Ascending aorta (tissue), 2 donors: ENCODE measurements at regions of chr16 and their contacts with region 1.

Region 1: DNA sequence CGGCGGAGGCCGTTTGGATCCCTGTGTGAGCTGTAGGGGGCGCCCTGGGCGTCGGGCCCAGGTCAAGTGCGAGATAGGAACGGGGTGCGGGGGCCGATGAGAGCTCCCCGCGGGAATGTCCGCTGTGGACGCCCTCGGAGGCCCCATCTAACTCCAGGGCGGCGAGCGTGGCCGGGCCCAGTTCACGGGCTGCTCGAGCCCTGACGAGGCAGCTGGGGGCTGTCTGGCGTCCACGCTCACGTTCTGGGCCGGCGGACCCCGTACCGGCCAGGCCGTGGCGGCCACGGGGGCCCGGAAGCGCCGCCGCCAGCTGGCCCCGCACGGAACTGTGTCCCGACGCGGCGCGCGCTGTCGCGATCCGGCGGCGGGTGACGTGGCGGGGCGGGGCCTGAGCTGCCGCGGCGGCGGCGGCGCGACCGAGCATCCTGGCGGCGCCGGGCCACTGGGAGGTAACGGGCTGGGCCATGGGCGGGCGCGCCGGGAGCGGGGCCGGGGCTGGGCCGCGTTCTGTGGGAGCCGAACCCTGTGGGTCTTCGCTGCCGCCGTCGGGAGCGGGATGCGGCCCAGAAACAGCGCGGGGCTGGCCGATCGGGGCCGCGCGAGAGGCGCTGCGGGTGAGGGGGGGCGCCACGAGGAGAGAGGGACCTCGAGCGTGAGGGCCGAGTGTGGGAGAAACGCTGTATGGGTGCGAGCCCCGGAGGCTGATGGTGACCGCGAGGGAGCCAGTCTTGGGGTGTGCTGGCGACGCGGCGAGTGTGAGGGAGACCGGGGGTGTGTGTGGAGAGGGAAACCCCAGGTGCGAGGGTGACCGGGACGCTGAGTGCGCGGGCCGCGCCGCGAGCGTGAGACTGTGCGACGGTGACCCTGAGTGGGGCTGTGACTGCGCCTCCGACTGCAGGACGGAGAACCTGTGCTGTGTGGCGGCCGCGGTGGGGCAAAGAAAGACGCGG is at the start of gene SLC7A6:
- DNase-seq: peak; percentile 40 to 87
- H3K4me3 ChIP-seq: peak within 1 kb of the TSS; percentile 76 to 90
- H3K27ac ChIP-seq: peak within 1 kb of the TSS; percentile 97 to 99
- H3K4me1 ChIP-seq: peaks cover 0 to 22% of the 10 kb centered on the region in 2 donors
- H3K27me3 ChIP-seq: no peaks in the 10 kb centered on the region
- CTCF ChIP-seq: peak; percentile 62 to 80 (median 76)
- total RNA-seq, gene SLC7A6: 27.7 TPM

Region 2: DNA sequence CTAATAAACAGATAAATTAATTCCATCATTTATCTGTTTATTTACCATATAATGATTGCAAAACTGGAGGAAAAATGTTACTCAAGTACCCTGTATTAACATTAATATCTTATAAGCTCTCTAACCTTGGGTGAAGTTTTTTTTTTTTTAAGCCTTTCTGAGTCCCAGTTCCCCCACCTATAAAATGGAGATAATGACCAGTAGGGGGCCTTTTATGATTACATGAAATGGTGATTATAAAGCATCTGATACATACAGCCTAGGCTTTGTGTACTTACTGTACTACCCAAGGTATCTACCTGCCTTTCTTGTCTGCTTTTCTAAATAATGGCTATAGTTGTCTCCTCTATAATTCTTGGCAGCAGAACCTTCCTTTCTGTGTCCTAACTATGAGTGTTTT is 915.2 kb before region 1 on chr16:
- intact Hi-C with region 1: no loop called
- DNase-seq: no peak
- H3K4me3 ChIP-seq: no peak overlapping the region
- H3K27ac ChIP-seq: no peak overlapping the region
- H3K4me1 ChIP-seq: no peaks in the 10 kb centered on the region
- H3K27me3 ChIP-seq: no peaks in the 10 kb centered on the region
- CTCF ChIP-seq: no peak

Region 3: DNA sequence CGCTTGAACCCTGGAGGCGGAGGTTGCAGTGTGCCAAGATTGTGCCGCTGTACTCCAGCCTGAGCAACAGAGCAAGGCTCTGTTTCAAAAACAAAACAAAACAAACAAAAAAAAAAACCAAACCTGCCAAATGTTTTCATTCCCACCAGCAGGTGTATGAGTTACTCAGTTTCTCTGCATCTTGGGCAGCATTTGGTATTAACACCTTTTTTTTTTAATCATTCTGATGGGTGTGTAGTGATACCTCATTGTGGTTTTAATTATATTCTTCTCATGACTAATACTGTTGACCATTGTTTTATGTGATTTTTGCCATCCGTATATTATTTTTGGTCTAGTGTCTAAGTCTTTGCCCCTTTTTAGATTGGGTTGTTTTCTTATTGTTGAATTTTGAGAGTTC is 163.9 kb before region 1 on chr16:
- intact Hi-C with region 1: no loop called
- DNase-seq: no peak
- H3K4me3 ChIP-seq: no peak overlapping the region
- H3K27ac ChIP-seq: no peak overlapping the region
- H3K4me1 ChIP-seq: peaks cover 0 to 5% of the 10 kb centered on the region in 2 donors
- H3K27me3 ChIP-seq: no peaks in the 10 kb centered on the region
- CTCF ChIP-seq: no peak

Region 4: GRCh38 chr16:68244903-68245853 is 19.2 kb before region 1 on chr16 and contains the start of gene PLA2G15:
- intact Hi-C with region 1: loop called (anchors 1 kb)
- DNase-seq: peak; percentile 72 to 97
- H3K4me3 ChIP-seq: peak within 1 kb of the TSS; percentile 67 to 92
- H3K27ac ChIP-seq: peak within 1 kb of the TSS; percentile 6 to 75
- H3K4me1 ChIP-seq: peaks cover 24 to 34% of the 10 kb centered on the region in 2 donors
- H3K27me3 ChIP-seq: no peaks in the 10 kb centered on the region
- CTCF ChIP-seq: no peak
- total RNA-seq, gene PLA2G15: 21.9 TPM

Region 5: GRCh38 chr16:68287276-68288251 is 23.2 kb after region 1 on chr16:
- intact Hi-C with region 1: loop called (anchors 1 kb)
- DNase-seq: peak; percentile 65 to 92
- H3K4me3 ChIP-seq: no peak overlapping the region
- H3K27ac ChIP-seq: peak overlapping the region; percentile 47 to 85
- H3K4me1 ChIP-seq: peaks cover 21 to 39% of the 10 kb centered on the region in 2 donors
- H3K27me3 ChIP-seq: no peaks in the 10 kb centered on the region
- CTCF ChIP-seq: peak in 1 of 3 experiments; percentile 49

Region 6: DNA sequence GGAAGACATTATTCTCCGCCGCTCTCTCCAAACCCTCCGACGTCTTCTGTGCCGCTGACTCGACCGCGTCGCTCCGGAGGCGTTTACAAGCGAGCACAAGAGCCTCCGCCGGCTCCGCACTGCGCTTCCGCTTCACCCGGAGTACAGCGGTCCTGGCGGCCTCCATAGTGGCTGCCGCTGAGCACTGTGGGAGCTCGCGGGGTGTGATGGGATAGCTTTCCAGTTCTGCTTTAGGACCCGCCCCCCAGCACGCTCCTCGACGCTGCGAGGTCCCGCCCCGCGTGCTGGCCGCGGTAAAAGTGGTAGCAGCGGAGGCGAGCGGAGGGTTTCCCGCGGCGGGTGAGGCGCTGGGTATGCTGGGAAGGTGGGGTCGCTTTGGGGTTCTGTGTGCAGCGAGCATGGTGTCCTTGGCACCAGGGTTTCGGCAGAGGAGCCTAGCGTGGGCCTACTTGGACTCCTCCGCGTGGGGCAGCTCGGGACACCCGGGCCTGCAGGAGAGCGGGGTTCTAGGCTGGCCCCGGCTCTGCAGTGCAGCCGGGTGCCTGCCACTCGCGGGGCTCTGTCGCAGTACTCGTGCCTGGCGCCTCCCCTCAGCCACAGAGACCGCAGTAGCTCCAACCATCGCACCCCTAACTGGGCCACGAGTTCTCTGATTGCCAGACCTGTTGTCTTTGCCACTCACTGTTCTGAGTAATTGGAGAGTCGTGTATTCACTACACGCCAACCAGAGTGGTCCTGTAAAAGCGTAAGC is 46.5 kb after region 1 on chr16 and contains the starts of genes PRMT7 and SLC7A6OS:
- intact Hi-C with region 1: loop called (anchors 1 kb)
- DNase-seq: peak; percentile 68 to 93
- H3K4me3 ChIP-seq: peak within 1 kb of the TSS; percentile 87 to 88
- H3K27ac ChIP-seq: peak within 1 kb of the TSS; percentile 58 to 68
- H3K4me1 ChIP-seq: peaks cover 7 to 17% of the 10 kb centered on the region in 2 donors
- H3K27me3 ChIP-seq: no peaks in the 10 kb centered on the region
- CTCF ChIP-seq: peak in 2 of 3 experiments; percentile 20 to 53
- total RNA-seq, gene PRMT7: 25.1 TPM
- total RNA-seq, gene SLC7A6OS: 14.4 TPM